GM23248 (cell line): ENCODE measurements at regions of chr1 and their contacts with region 1.

Region 1: GRCh38 chr1:17125756-17126237 is 6.5 kb upstream of the PADI2 start:
- DNase-seq: peak; percentile 88
- H3K4me3 ChIP-seq: no peak overlapping the region
- H3K27ac ChIP-seq: no peak overlapping the region
- H3K4me1 ChIP-seq: peaks cover 38% of the 10 kb centered on the region
- H3K27me3 ChIP-seq: no peaks in the 10 kb centered on the region

Region 2: DNA sequence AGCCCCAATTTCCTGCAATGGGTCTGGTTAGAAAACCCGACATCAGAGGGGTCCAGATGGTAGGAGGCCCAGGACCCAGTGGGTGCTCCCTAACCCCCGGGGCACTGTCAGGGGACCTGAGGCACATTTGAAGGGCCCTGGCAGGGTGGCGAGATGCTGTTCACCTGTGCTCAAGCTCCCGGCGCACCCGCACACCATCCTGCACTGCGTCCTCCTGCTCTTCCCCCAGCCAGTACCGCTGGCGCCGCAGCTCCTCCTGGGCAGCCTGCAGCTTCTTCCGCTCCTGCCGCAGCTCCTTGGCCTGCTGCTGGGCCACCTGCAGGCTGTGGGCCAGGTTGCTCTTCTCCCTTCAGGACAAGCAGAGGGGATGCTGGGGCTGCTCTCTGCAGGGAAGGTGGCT is 647.7 kb before region 1 on chr1:
- in situ Hi-C with region 1: no loop called
- DNase-seq: no peak
- H3K4me3 ChIP-seq: no peak overlapping the region
- H3K27ac ChIP-seq: no peak overlapping the region
- H3K4me1 ChIP-seq: no peaks in the 10 kb centered on the region
- H3K27me3 ChIP-seq: no peaks in the 10 kb centered on the region

Region 3: GRCh38 chr1:17236779-17237560 is 111.2 kb after region 1 on chr1:
- in situ Hi-C with region 1: loop called (anchors 5 kb)
- DNase-seq: peak; percentile 83
- H3K4me3 ChIP-seq: no peak overlapping the region
- H3K27ac ChIP-seq: no peak overlapping the region
- H3K4me1 ChIP-seq: peaks cover 25% of the 10 kb centered on the region
- H3K27me3 ChIP-seq: no peaks in the 10 kb centered on the region